ENCODE measurements at regions of chr16 and their contacts with region 1.

Region 1: DNA sequence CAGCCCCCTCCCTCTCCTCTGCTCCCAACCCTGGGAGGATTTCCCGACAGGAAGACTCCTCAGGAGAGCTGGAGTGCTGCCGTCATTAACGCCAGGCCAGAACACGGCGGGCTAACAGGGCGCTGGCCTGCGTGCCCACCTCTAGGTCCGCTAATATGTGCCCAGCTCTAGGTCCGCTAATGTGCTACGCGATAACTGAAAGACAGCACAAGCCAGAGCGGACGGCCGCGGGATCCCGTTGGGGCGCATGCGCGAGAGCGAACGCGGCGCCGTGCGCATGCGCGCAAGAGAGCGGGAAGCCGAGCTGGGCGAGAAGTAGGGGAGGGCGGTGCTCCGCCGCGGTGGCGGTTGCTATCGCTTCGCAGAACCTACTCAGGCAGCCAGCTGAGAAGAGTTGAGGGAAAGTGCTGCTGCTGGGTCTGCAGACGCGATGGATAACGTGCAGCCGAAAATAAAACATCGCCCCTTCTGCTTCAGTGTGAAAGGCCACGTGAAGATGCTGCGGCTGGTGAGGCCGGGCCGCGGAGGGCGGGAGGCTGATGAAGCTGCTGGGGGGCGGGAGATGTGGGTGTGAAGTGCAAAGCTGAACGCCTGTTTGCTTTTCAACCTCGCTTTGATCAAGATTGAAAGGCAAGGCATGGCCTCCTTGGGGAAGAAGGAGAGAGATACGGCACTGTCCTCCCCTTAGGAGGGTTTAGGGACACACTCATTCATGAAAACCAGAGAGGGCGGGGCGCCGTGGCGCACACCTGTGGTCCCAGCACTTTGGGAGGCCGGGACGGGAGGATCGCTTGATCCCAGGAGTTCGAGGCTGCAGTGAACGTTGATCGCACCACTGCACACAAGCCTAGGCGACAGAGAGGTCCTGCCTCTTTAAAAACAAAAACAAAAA is at the start of gene CKLF:
- DNase-seq: peak; percentile 86 to 93 (median 90)
- ATAC-seq: peak; percentile 67 to 71
- H3K4me3 Mint-ChIP-seq: peak within 1 kb of the TSS; percentile 92 to 99 (median 96)
- H3K27ac Mint-ChIP-seq: peak within 1 kb of the TSS; percentile 88 to 97 (median 95)
- H3K4me1 Mint-ChIP-seq: peaks cover 59 to 84% (median 76%) of the 10 kb centered on the region in 4 donors
- H3K27me3 Mint-ChIP-seq: peaks cover 0 to 2% (median 0%) of the 10 kb centered on the region in 5 donors
- polyA plus RNA-seq, gene CKLF: 99.6 to 179 (median 111) TPM

Region 2: GRCh38 chr16:66262253-66263167 is 290.0 kb before region 1 on chr16:
- POLR2A ChIA-PET with region 1: no interaction called
- DNase-seq: no peak
- ATAC-seq: no peak
- H3K4me3 Mint-ChIP-seq: no peak overlapping the region
- H3K27ac Mint-ChIP-seq: no peak overlapping the region
- H3K4me1 Mint-ChIP-seq: peaks cover 2 to 13% (median 5%) of the 10 kb centered on the region in 4 donors
- H3K27me3 Mint-ChIP-seq: peaks cover 7 to 39% (median 36%) of the 10 kb centered on the region in 5 donors

Region 3: GRCh38 chr16:66516808-66517585 is 35.5 kb before region 1 on chr16:
- POLR2A ChIA-PET with region 1: interaction called, 213 read pairs
- DNase-seq: peak in 9 of 10 donors; percentile 16 to 84 (median 35)
- ATAC-seq: peak; percentile 82 to 91
- H3K4me3 Mint-ChIP-seq: peak overlapping the region; percentile 0 to 89 (median 67)
- H3K27ac Mint-ChIP-seq: peak overlapping the region; percentile 86 to 98 (median 94)
- H3K4me1 Mint-ChIP-seq: peaks cover 26 to 80% (median 66%) of the 10 kb centered on the region in 4 donors
- H3K27me3 Mint-ChIP-seq: no peaks in the 10 kb centered on the region

Region 4: GRCh38 chr16:66580605-66581209 is 28.2 kb after region 1 on chr16:
- POLR2A ChIA-PET with region 1: interaction called, 11 read pairs
- DNase-seq: no peak
- ATAC-seq: no peak
- H3K4me3 Mint-ChIP-seq: peak overlapping the region in 3 of 10 donors; percentile 14 to 76 (median 20)
- H3K27ac Mint-ChIP-seq: no peak overlapping the region
- H3K4me1 Mint-ChIP-seq: peaks cover 8 to 25% (median 21%) of the 10 kb centered on the region in 4 donors
- H3K27me3 Mint-ChIP-seq: peaks cover 5 to 39% (median 32%) of the 10 kb centered on the region in 5 donors

Region 5: GRCh38 chr16:66588981-66589713 is 36.6 kb after region 1 on chr16:
- POLR2A ChIA-PET with region 1: interaction called, 11 read pairs
- DNase-seq: peak; percentile 35 to 85 (median 56)
- ATAC-seq: peak; percentile 95
- H3K4me3 Mint-ChIP-seq: peak overlapping the region; percentile 77 to 91 (median 88)
- H3K27ac Mint-ChIP-seq: peak overlapping the region; percentile 18 to 91 (median 68)
- H3K4me1 Mint-ChIP-seq: peaks cover 13 to 45% (median 34%) of the 10 kb centered on the region in 4 donors
- H3K27me3 Mint-ChIP-seq: peaks cover 0 to 5% (median 0%) of the 10 kb centered on the region in 5 donors

Region 6: DNA sequence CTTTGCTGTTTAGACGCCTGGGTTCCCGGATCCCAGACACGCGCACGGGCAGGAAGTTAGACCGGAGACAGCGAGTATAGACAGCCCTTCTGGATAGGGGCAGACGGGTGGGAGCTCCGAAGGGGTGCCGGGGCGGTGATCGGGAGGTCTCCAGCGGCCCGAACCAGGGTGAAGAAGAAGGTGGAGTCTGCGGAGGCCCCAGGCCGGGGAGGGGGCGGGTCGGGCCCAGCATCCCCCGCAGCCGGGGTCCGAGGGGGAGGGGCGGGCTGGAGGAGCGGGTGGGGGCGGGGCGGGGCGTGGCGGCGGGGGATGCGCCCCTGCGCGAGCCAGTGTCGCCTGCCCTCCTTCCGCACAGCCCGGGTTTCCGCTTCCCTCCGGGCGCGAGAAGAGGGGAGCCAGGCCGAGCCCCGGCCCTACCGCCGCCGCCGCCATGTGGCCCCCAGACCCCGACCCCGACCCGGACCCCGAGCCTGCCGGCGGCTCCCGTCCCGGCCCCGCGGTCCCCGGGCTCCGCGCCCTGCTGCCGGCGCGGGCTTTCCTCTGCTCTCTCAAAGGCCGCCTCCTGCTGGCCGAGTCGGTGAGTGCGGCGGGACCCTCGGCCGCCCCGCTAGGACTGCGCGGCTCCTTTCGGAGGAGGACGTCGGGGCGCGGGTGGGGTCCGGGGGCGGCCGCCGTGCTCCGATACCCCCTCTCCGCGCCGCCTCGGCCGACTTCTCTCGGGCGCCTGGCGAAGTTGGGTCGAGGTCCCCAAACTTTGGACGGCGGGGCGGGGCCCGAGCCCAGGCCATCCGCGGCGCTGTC is 52.0 kb after region 1 on chr16 and contains the start of gene CMTM3:
- POLR2A ChIA-PET with region 1: interaction called, 33 read pairs
- DNase-seq: peak; percentile 56 to 82 (median 72)
- ATAC-seq: peak; percentile 55 to 62
- H3K4me3 Mint-ChIP-seq: peak within 1 kb of the TSS; percentile 85 to 97 (median 93)
- H3K27ac Mint-ChIP-seq: peak within 1 kb of the TSS; percentile 91 to 97 (median 94)
- H3K4me1 Mint-ChIP-seq: peaks cover 22 to 62% (median 53%) of the 10 kb centered on the region in 4 donors
- H3K27me3 Mint-ChIP-seq: peaks cover 0 to 2% (median 0%) of the 10 kb centered on the region in 5 donors
- polyA plus RNA-seq, gene CMTM3: 76.1 to 81.3 (median 78.5) TPM